ENCODE measurements at regions of chr18 and their contacts with region 1.

Region 1: DNA sequence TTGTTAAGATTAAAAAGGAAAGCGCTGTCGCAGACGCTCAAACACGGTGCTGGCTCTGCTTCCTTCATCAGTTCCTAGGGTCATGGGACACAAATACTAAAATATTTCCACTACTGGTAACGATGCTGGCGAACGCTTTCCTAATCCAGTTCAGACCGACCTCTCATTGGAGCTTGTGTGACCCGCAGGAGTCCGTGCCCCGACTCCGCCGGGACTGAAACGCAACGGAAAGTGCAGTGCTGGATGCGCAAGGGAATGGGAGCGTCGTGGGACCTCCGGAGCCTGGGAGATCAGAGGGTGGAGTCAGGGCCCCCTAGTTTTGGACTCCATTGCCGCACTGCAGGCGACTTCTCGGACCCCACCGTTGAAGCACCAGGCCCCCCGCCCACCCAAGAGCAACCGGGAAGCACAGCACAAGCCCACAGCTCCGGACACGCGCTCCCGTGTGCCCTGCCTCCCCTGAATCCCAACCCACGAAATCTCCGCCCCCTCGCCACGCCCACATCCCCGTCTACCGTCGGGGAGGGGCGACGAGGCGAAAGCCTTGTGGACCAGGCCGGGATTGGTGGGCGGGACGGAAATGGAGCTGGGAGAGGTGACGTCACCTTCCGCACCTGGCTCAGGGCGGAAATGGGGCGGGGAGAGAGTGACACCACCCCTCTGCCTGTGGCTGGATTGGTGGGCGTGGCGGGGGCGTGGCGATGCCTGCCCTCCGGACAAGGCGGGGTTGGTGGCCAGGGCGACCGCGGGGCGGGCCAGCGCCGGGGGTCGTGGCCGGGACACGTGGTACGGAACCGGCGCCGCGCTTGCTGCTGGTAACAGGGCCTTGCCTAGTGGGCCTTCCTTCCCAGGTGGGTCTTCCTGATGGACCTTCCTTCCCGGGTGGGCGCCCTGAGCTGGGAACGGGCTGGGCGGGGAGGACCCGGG is at the start of gene CNDP2:
- DNase-seq: peak; percentile 100
- H3K4me3 Mint-ChIP-seq: peak within 1 kb of the TSS; percentile 98
- H3K27ac Mint-ChIP-seq: peak within 1 kb of the TSS; percentile 98
- H3K4me1 Mint-ChIP-seq: peaks cover 38% of the 10 kb centered on the region
- H3K27me3 Mint-ChIP-seq: no peaks in the 10 kb centered on the region
- total RNA-seq, gene CNDP2: 101 to 107 TPM

Region 2: DNA sequence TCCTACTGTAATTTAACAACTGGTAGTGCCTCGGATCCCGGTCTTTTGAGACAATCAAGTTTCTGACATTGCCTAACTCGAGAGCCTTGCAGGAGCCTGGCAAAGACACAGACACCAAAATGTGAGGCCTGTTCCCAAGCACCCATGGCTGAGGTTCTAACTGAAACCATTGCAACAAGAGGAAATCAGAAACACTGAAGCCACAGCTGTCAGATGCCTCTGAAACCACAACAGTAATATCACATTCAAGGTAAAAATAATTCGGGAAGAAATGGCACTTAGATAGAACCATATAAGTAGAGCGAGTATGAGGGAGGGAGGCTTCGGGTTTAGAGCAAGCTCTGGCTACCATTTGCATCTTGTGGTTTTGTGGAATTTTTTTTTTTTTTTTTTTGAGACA is 634.1 kb before region 1 on chr18:
- CTCF ChIA-PET with region 1: no interaction called
- intact Hi-C with region 1: no loop called
- DNase-seq: no peak
- H3K4me3 Mint-ChIP-seq: no peak overlapping the region
- H3K27ac Mint-ChIP-seq: no peak overlapping the region
- H3K4me1 Mint-ChIP-seq: no peaks in the 10 kb centered on the region
- H3K27me3 Mint-ChIP-seq: peaks cover 4% of the 10 kb centered on the region

Region 3: DNA sequence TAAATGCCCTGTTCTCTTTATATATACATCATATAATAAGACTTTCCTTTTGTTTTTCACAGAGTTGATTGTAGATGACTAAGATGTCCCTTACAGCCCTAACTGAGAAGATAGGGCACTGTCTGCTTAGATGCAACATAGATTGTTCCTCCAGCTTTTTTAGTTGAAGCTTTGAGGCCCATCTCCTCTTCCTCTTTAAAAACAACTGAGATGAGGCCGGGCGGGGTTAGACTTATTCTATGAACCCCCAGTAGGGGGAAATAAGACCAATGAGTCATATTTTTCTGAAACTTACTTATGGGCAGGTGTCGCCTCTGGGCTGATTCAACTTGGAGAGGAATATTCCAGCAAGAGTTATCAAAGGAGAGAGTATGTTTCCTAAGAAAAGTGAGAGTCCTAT is 432.8 kb before region 1 on chr18:
- CTCF ChIA-PET with region 1: no interaction called
- intact Hi-C with region 1: loop called (anchors 1 kb)
- DNase-seq: peak; percentile 75
- H3K4me3 Mint-ChIP-seq: peak overlapping the region; percentile 3
- H3K27ac Mint-ChIP-seq: peak overlapping the region; percentile 88
- H3K4me1 Mint-ChIP-seq: peaks cover 40% of the 10 kb centered on the region
- H3K27me3 Mint-ChIP-seq: no peaks in the 10 kb centered on the region

Region 4: GRCh38 chr18:74196220-74197119 is 299.4 kb before region 1 on chr18:
- CTCF ChIA-PET with region 1: interaction called, 19 read pairs
- intact Hi-C with region 1: loop called (anchors 1 kb)
- DNase-seq: peak; percentile 64
- H3K4me3 Mint-ChIP-seq: peak overlapping the region; percentile 63
- H3K27ac Mint-ChIP-seq: peak overlapping the region; percentile 28
- H3K4me1 Mint-ChIP-seq: peaks cover 3% of the 10 kb centered on the region
- H3K27me3 Mint-ChIP-seq: peaks cover under 1% of the 10 kb centered on the region

Region 5: DNA sequence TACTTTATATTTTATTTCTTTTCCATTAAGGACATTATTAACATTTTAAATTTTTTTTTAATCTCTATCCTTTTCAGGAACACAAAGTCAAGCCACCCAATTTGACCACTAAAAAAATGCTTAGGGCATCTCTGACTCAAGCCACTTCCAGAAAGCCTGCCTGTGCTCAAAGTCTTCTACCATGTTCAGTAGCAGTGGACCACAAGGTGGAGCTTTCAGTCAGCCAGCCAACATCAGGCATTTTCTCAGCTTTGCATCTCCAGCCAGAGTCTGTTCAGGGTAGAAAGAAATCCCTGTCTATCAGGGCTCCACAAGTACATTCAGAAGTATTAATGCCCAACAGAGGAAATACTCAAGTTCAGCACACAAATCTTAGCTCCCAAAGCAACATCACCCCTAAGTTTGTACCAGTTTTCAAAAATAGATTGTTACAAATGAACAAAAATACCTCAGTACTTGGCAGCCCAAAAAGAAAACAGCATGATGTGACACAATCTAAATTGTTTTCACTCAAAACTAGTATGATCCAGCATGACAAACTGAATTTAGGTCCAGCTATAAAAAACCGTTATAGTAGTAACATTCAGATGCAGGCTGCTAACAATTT is 142.6 kb before region 1 on chr18:
- CTCF ChIA-PET with region 1: interaction called, 74 read pairs
- intact Hi-C with region 1: loop called (anchors 1 kb)
- DNase-seq: peak; percentile 77
- H3K4me3 Mint-ChIP-seq: no peak overlapping the region
- H3K27ac Mint-ChIP-seq: no peak overlapping the region
- H3K4me1 Mint-ChIP-seq: peaks cover 6% of the 10 kb centered on the region
- H3K27me3 Mint-ChIP-seq: no peaks in the 10 kb centered on the region

Region 6: DNA sequence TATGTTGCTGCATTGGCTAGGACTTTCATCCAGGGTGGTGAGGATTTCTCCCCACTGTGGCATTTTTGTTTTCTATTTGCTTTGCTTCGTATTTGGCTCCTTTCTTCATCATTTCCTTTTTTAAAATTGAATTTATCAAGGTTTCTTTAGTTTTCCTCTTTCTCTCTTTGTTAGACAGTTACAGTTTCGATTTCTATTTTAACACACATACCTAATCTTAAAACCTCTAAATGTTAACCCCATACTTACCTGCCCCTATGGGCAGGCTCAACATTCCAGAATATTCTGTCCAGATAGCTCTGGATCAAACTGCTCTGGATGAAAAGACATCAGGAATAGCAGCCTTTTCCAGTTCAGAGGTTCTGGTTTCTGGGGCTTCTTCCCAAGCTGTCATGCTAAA is 88.0 kb before region 1 on chr18:
- CTCF ChIA-PET with region 1: no interaction called
- intact Hi-C with region 1: loop called (anchors 5 kb)
- DNase-seq: no peak
- H3K4me3 Mint-ChIP-seq: peak overlapping the region; percentile 66
- H3K27ac Mint-ChIP-seq: peak overlapping the region; percentile 84
- H3K4me1 Mint-ChIP-seq: peaks cover 30% of the 10 kb centered on the region
- H3K27me3 Mint-ChIP-seq: no peaks in the 10 kb centered on the region

Region 7: DNA sequence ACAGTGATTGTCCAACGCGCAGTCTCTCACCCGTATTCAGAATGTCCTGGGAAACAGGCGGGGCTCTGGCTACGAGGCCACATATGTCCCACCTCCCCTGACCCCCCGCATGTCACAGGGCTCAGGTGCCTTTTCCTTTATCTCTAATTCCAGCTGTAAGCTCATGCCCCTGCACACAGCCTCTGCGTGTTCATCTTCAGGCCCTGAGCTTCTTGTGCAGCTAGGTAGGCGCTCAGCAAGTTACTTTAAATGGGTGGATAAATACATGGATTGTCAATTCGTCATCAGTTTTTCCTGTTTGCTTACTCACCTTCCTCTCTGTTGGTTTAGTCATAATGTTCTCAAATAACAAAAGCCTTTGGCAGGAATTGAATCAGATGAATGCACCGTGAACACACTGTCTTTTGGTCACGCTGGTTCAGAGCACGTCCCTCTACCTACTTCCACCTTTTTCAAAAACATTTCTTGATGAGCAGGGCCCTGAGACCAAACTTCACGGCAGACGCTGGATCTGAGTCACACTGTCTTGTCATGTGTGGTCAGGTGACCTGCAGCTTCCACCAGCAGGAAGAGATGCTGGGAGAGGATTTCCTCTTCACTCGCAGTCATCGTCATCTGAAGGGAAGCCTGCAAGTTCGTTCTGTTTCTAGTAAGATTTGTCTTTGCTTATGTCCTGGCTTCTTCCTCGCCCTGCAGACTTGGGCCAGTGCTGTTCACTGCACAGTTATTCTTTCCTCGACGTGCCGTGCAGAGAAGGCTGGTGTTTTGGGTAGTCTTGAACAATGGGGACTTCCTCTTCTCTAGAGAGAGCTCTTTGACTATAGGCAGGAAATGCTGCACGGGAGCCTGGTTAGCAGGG is 575.0 kb after region 1 on chr18:
- CTCF ChIA-PET with region 1: no interaction called
- intact Hi-C with region 1: loop called (anchors 2 kb)
- DNase-seq: peak; percentile 88
- H3K4me3 Mint-ChIP-seq: peak overlapping the region; percentile 73
- H3K27ac Mint-ChIP-seq: peak overlapping the region; percentile 95
- H3K4me1 Mint-ChIP-seq: peaks cover 31% of the 10 kb centered on the region
- H3K27me3 Mint-ChIP-seq: no peaks in the 10 kb centered on the region

Measured in activated naive CD4-positive, alpha-beta T cell treated with anti-CD3 and anti-CD28 coated beads for 36 hours (primary cell).